Aorta (tissue), 5 donors: ENCODE measurements at regions of chr12 and their contacts with region 1.

Region 1: DNA sequence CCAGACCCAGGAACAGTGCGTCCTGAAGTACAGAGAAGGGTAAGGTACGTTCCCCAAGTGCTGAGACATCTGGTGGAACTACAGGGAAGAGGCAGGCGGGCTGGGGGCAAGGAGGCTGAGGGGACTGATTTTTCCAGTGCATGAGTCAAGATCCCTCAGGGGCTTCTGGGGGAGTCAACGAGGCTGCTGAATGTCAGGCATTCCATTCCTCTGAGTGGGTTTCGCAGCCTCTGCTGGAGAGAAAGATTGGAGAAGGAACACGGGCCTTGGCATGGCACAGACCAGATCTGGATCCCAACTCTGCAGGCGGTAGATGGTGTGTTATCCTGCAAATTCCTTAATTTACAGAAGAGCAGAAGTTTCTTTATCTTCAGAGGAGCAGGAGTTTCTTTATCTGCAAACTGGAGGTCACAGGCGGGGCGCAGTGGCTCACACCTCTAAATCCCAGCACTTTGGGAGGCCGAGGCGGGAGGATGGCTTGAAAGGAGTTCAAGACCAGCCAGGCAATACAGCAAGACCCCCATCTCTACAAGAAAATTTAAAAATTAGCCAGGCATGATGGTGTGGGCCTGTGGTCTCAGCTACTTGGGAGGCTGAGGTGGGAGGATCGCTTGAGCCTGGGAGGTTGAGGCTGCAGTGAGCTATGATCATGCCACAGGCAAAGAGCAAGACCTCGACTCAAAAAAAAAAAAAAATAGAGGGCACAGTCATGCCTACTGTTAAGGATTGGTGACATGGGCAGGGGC is 132.6 kb upstream of the MAP1LC3B2 start:
- DNase-seq: peak; percentile 86 to 91
- ATAC-seq: peak; percentile 91
- H3K4me3 ChIP-seq: no peak overlapping the region
- H3K27ac ChIP-seq: peak overlapping the region in 1 of 2 donors; percentile 56
- H3K4me1 ChIP-seq: no peaks in the 10 kb centered on the region
- H3K27me3 ChIP-seq: no peaks in the 10 kb centered on the region

Region 2: GRCh38 chr12:115569345-115570068 is 857.1 kb before region 1 on chr12:
- intact Hi-C with region 1: no loop called
- DNase-seq: no peak
- ATAC-seq: no peak
- H3K4me3 ChIP-seq: no peak overlapping the region
- H3K27ac ChIP-seq: no peak overlapping the region
- H3K4me1 ChIP-seq: no peaks in the 10 kb centered on the region
- H3K27me3 ChIP-seq: no peaks in the 10 kb centered on the region

Region 3: GRCh38 chr12:116142936-116143898 is 283.3 kb before region 1 on chr12:
- intact Hi-C with region 1: loop called in 1 of 2 experiments (anchors 5 kb)
- DNase-seq: no peak
- ATAC-seq: no peak
- H3K4me3 ChIP-seq: no peak overlapping the region
- H3K27ac ChIP-seq: peak overlapping the region; percentile 44 to 67
- H3K4me1 ChIP-seq: peaks cover 2 to 6% of the 10 kb centered on the region in 2 donors
- H3K27me3 ChIP-seq: no peaks in the 10 kb centered on the region

Region 4: DNA sequence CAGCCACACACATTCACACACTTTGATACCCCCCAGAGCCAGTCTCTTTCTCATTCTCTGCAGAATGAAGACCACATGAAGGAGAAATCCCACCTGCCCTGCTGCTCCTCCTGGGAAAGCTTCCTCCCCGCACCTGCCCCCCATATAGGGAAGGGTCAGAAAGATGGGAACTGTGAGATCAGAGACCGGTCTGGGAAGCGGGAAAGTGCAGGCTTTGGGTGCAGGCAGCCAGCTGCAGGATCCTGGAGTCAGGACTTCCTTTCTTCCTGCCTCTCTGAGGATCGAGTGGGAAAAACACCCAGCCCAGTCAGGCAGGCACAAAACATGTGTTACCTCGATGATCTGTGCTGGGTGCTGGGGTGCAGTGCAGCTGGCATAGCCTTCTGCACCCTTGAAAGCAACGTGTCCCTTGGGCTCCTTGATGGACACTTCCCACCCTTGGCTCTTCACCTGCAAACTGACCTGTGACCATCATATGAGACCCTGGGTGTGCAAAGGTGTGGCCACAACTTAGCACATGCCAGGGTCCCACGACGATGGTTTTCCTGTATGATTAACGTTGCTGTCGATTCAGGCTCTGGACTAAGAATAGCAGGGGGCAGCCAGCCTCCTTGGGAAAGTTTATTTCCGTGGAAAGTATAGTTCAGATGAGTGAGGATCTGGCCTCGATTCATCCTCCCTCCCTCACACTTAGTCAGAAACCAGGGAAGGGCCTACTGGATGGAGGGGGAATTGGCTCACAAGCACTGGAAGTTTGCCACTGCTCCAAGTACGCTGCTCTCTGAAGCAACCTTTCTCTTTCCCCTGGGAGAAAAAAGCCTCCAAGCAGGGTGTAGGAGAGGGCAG is 43.7 kb before region 1 on chr12:
- intact Hi-C with region 1: loop called (anchors 5 kb)
- DNase-seq: peak; percentile 88 to 89
- ATAC-seq: peak; percentile 90
- H3K4me3 ChIP-seq: no peak overlapping the region
- H3K27ac ChIP-seq: peak overlapping the region in 1 of 2 donors; percentile 6
- H3K4me1 ChIP-seq: no peaks in the 10 kb centered on the region
- H3K27me3 ChIP-seq: no peaks in the 10 kb centered on the region